Esophagus muscularis mucosa (tissue), 4 donors: ENCODE measurements at regions of chr1 and their contacts with region 1.

Region 1: DNA sequence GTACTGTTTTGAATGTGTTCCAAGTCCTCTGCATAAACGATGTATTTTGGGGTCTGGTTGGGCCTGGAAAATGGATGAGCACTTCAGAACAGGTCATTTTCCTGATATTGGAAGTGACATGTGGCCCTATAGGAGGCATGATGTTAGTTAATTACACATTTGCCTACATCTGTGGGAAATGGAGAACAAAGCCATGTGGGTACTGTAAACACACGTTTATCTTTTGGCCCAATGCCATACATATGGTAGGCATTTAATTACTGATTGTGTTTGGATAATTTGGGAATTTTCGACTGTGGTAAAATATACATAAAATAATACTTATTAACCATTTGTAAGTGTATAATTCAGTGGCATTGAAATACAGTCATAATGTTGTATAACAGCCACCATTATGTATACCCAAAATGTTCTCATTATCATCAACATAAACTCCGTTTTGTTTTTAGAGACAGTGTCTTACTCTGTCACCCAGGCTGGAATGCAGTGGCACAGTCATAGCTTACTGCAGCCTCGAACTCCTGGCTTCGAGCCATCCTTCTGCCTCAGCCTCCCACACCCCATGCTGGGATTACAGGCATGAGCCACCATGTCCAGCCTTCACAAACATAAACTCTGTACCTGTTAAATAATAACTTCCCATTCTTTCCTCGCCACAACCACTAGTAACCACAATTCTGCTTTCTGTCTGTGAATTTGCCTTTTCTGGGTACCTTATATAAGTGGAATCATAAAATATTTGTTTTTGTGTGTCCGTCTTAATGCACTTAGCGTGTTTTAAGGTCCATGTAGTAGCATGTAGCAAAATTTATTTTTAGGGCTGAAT is 11.9 kb upstream of the RNPEP start:
- DNase-seq: no peak
- H3K4me3 ChIP-seq: no peak overlapping the region
- H3K27ac ChIP-seq: no peak overlapping the region
- H3K4me1 ChIP-seq: peaks cover 5 to 14% (median 8%) of the 10 kb centered on the region in 4 donors
- H3K27me3 ChIP-seq: no peaks in the 10 kb centered on the region
- CTCF ChIP-seq: no peak
- EP300 ChIP-seq: no peak
- POLR2A ChIP-seq: no peak

Region 2: DNA sequence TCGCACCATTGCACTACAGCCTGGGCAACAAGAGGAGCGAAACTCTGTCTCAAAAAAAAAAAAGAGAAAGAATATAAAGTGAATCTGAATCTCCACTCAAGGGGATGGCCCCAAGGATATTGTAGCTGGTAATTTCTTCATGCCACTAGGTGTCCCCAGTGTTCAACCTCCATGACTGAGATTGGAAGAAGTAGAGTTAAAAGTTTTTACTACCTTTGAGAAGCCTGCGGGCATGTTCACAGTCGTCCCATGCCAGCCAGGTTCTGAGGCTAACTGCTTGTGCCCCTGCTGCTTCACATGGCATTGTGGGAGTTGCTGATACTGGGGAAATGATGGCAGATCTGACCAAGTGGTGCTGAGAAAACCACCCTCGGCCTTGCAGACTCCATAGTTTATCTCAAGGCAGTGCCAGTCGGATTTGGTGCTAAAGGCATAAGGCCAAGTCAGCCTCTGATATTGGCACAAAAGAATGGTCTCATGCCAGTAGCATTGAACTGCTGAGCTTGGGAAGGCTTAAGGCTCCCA is 92.6 kb before region 1 on chr1:
- intact Hi-C with region 1: loop called (anchors 1 kb)
- DNase-seq: no peak
- H3K4me3 ChIP-seq: no peak overlapping the region
- H3K27ac ChIP-seq: peak overlapping the region in 3 of 4 donors; percentile 3 to 19 (median 15)
- H3K4me1 ChIP-seq: peaks cover 8 to 20% (median 11%) of the 10 kb centered on the region in 4 donors
- H3K27me3 ChIP-seq: no peaks in the 10 kb centered on the region
- CTCF ChIP-seq: peak; percentile 62 to 74 (median 68)
- EP300 ChIP-seq: no peak
- POLR2A ChIP-seq: no peak